Activated CD4-positive, alpha-beta T cell treated with anti-CD3 and anti-CD28 coated beads for 36 hours (primary cell): ENCODE measurements at regions of chr12 and their contacts with region 1.

Region 1: GRCh38 chr12:120820885-120821510 is 83.2 kb downstream of the SPPL3 start:
- DNase-seq: peak; percentile 75
- ATAC-seq: peak; percentile 86
- H3K4me3 Mint-ChIP-seq: peak overlapping the region; percentile 43
- H3K27ac Mint-ChIP-seq: peak overlapping the region; percentile 81
- H3K4me1 Mint-ChIP-seq: peaks cover 44% of the 10 kb centered on the region
- H3K27me3 Mint-ChIP-seq: no peaks in the 10 kb centered on the region

Region 2: GRCh38 chr12:120662879-120663278 is 158.1 kb before region 1 on chr12:
- CTCF ChIA-PET with region 1: no interaction called
- POLR2A ChIA-PET with region 1: no interaction called
- intact Hi-C with region 1: no loop called
- DNase-seq: no peak
- ATAC-seq: no peak
- H3K4me3 Mint-ChIP-seq: no peak overlapping the region
- H3K27ac Mint-ChIP-seq: no peak overlapping the region
- H3K4me1 Mint-ChIP-seq: no peaks in the 10 kb centered on the region
- H3K27me3 Mint-ChIP-seq: no peaks in the 10 kb centered on the region

Region 3: GRCh38 chr12:120797677-120798642 is 23.0 kb before region 1 on chr12:
- CTCF ChIA-PET with region 1: interaction called, 7 read pairs
- POLR2A ChIA-PET with region 1: no interaction called
- intact Hi-C with region 1: loop called in 1 of 2 experiments (anchors 1 kb)
- DNase-seq: peak; percentile 30
- ATAC-seq: peak; percentile 76
- H3K4me3 Mint-ChIP-seq: no peak overlapping the region
- H3K27ac Mint-ChIP-seq: peak overlapping the region; percentile 83
- H3K4me1 Mint-ChIP-seq: peaks cover 65% of the 10 kb centered on the region
- H3K27me3 Mint-ChIP-seq: no peaks in the 10 kb centered on the region

Region 4: GRCh38 chr12:121209624-121210572 is 388.9 kb after region 1 on chr12 and contains the start of gene P2RX4:
- CTCF ChIA-PET with region 1: no interaction called
- POLR2A ChIA-PET with region 1: no interaction called
- intact Hi-C with region 1: no loop called
- DNase-seq: peak; percentile 93
- ATAC-seq: peak; percentile 79
- H3K4me3 Mint-ChIP-seq: peak within 1 kb of the TSS; percentile 79
- H3K27ac Mint-ChIP-seq: peak within 1 kb of the TSS; percentile 89
- H3K4me1 Mint-ChIP-seq: peaks cover 31% of the 10 kb centered on the region
- H3K27me3 Mint-ChIP-seq: no peaks in the 10 kb centered on the region
- total RNA-seq, gene P2RX4: 21.2 to 21.6 TPM